Adrenal gland (tissue), 19 donors: ENCODE measurements at regions of chr22 and their contacts with region 1.

Region 1: DNA sequence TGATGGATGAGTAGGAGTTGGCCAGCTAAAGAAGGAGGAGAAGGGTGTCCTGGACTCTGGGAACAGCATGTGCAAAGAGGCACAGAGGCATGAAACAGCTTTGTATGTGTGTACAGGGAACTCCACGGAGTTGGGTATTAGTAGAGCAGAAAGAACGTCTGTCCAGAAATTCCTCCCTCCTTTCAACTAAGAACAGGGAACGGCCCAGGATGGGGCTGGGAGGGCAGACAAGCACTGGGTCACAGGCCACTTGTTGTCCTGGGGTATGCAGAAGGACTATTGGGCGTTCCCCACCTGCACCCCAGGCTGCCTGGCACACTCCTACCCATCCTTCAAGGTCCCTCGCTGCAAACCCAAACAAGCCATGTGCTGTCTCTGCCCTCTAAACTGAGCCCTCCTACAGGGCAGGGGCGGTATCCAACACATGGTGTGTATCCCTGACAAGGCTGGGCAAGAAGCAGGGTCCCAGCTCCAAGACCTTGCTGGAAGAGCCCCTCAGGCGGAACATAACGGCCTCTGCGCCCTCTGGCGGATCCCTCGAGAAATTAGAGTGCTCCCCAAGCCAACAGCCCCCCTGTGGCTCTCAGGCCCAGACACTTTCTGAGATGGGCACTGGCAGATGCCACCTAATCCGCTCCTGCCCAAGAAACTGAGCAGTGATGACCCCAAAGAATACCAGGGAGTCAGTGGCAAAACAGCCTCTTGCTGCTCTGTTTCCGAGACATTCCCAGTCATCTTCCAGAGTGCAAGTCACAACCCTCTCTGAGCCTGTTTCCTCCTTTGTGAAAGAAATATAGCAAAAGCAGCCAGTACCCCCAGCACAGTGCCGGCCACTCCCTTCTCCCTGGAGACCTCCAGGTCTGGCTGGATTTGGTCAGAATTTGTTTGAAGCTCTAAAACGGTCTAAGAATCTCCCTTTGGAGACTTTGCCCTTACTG is 1.6 kb upstream of the ELFN2 start:
- DNase-seq: peak in 4 of 7 donors; percentile 37 to 44 (median 40)
- H3K4me3 ChIP-seq: no peak overlapping the region
- H3K27ac ChIP-seq: no peak overlapping the region
- H3K4me1 ChIP-seq: no peaks in the 10 kb centered on the region
- H3K27me3 ChIP-seq: peaks cover 39% of the 10 kb centered on the region
- CTCF ChIP-seq: peak; percentile 48 to 68 (median 58)
- POLR2A ChIP-seq: no peak

Region 2: DNA sequence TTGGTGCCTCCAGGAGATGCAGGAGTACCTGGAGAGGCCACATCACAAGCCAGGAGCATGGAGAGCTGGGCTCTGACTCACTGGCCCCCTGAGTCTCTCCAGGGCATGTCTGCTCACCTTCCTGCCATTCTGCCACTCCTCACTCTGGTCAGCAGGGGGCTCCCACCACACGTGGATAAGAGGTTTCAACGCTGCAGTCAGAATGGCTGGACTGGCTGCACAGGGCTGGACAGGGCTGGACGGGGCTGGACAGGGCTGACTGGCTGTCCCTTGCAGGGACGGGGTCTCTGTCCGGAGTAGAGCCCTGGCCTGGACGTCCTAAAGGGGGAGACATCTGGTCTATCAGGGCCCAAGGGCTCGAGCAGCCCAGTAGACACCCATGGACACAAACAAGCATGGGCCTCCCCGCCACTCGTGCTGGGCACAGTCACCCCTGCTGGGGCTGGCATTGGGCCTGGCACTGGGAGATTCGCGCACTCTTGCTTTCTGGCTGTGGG is 112.0 kb before region 1 on chr22:
- intact Hi-C with region 1: loop called (anchors 10 kb)
- DNase-seq: peak; percentile 81 to 90 (median 87)
- H3K4me3 ChIP-seq: no peak overlapping the region
- H3K27ac ChIP-seq: no peak overlapping the region
- H3K4me1 ChIP-seq: no peaks in the 10 kb centered on the region
- H3K27me3 ChIP-seq: no peaks in the 10 kb centered on the region
- CTCF ChIP-seq: peak; percentile 70 to 97 (median 92)
- POLR2A ChIP-seq: no peak

Region 3: DNA sequence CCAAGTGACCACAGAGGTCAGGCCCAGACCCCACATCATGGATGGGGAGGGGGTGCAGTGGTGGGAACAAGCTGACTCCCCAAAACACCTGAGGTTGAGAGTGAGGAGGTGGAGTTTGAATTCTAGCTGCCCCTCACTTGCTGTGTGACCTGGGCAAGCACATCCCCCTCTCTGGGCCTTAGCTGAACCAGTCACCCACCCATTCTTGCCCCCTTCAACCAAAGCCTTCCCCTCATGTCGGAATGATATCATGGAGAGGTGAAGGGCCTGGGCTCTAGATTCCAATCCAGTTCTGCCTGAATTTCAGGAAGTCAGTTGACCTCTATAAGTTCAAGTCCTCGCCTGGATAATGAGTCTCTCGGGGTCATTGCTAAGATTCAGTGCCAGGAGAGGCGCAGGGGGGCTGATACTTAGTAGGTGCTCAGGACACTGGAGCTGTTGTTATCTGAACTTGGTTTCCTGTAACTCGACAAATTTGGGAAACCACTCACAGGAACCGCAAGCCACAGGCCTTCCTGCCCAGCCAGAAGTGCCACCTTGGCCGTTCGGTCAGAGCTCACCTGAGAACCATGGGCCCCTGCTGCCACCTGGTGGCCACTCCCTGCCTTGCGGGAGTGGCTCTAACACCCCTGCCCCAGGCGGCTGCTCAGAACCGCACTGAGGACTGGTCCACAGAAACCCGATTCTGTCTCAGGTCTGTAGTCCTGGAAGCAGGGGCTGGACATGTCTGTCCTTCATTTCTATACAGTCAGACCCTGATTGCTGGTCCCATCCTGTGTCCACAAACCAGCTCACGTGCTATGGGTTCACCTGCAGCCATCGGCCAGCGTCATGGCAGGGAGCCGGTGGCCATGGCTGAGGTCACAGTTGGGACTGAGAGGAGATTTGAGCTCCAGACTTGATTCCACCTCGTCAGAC is 138.2 kb after region 1 on chr22:
- intact Hi-C with region 1: no loop called
- DNase-seq: peak; percentile 76 to 92 (median 86)
- H3K4me3 ChIP-seq: no peak overlapping the region
- H3K27ac ChIP-seq: peak overlapping the region in 3 of 5 donors; percentile 33 to 99 (median 73)
- H3K4me1 ChIP-seq: peaks cover 62 to 86% of the 10 kb centered on the region in 2 donors
- H3K27me3 ChIP-seq: no peaks in the 10 kb centered on the region
- CTCF ChIP-seq: peak; percentile 86 to 95 (median 94)
- POLR2A ChIP-seq: no peak

Region 4: GRCh38 chr22:37752466-37753087 is 323.7 kb after region 1 on chr22:
- intact Hi-C with region 1: no loop called
- DNase-seq: peak; percentile 89 to 96 (median 94)
- H3K4me3 ChIP-seq: peak overlapping the region in 1 of 4 donors; percentile 0
- H3K27ac ChIP-seq: peak overlapping the region; percentile 73 to 98 (median 94)
- H3K4me1 ChIP-seq: peaks cover 62 to 63% of the 10 kb centered on the region in 2 donors
- H3K27me3 ChIP-seq: no peaks in the 10 kb centered on the region
- CTCF ChIP-seq: peak in 4 of 6 experiments; percentile 12 to 48 (median 38)
- POLR2A ChIP-seq: peak in 1 of 2 donors; percentile 57